MCF 10A (cell line): ENCODE measurements at regions of chr3 and their contacts with region 1.

Region 1: GRCh38 chr3:112966633-112967032 is 8.3 kb downstream of the CD200R1 start:
- DNase-seq: no peak
- H3K4me3 Mint-ChIP-seq: no peak overlapping the region
- H3K27ac Mint-ChIP-seq: no peak overlapping the region
- H3K4me1 Mint-ChIP-seq: no peaks in the 10 kb centered on the region
- H3K27me3 Mint-ChIP-seq: peaks cover 53% of the 10 kb centered on the region
- CTCF ChIP-seq: no peak

Region 2: GRCh38 chr3:112770032-112770626 is 196.5 kb before region 1 on chr3:
- CTCF ChIA-PET with region 1: no interaction called
- POLR2A ChIA-PET with region 1: no interaction called
- intact Hi-C with region 1: no loop called
- DNase-seq: peak; percentile 48
- H3K4me3 Mint-ChIP-seq: no peak overlapping the region
- H3K27ac Mint-ChIP-seq: no peak overlapping the region
- H3K4me1 Mint-ChIP-seq: peaks cover 12% of the 10 kb centered on the region
- H3K27me3 Mint-ChIP-seq: no peaks in the 10 kb centered on the region
- CTCF ChIP-seq: no peak

Region 3: GRCh38 chr3:112984485-112984884 is 17.9 kb after region 1 on chr3:
- CTCF ChIA-PET with region 1: interaction called, 10 read pairs
- POLR2A ChIA-PET with region 1: no interaction called
- intact Hi-C with region 1: no loop called
- DNase-seq: peak; percentile 30
- H3K4me3 Mint-ChIP-seq: no peak overlapping the region
- H3K27ac Mint-ChIP-seq: no peak overlapping the region
- H3K4me1 Mint-ChIP-seq: no peaks in the 10 kb centered on the region
- H3K27me3 Mint-ChIP-seq: peaks cover 30% of the 10 kb centered on the region
- CTCF ChIP-seq: no peak

Region 4: DNA sequence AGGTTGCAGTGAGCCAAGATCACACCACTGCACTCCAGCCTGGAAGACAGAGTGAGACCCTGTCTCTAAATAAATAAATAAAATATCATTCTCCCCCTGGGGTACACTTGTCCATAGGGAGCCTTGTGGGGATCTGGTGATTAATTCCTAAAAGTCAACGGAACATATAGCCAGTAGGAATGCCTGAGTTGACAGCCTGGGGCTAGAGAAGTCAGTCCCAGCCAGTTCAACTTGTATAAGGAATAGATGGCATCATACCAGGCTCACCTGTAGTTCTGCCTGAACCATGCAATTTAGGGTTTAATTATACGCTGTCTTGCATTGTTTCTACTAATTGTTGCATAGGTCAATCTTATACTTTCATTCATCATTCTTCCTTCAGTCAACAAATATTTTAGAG is 238.8 kb after region 1 on chr3:
- CTCF ChIA-PET with region 1: no interaction called
- POLR2A ChIA-PET with region 1: no interaction called
- intact Hi-C with region 1: no loop called
- DNase-seq: no peak
- H3K4me3 Mint-ChIP-seq: no peak overlapping the region
- H3K27ac Mint-ChIP-seq: no peak overlapping the region
- H3K4me1 Mint-ChIP-seq: no peaks in the 10 kb centered on the region
- H3K27me3 Mint-ChIP-seq: no peaks in the 10 kb centered on the region
- CTCF ChIP-seq: no peak